T-cell (primary cell): ENCODE measurements at regions of chr3 and their contacts with region 1.

Region 1: DNA sequence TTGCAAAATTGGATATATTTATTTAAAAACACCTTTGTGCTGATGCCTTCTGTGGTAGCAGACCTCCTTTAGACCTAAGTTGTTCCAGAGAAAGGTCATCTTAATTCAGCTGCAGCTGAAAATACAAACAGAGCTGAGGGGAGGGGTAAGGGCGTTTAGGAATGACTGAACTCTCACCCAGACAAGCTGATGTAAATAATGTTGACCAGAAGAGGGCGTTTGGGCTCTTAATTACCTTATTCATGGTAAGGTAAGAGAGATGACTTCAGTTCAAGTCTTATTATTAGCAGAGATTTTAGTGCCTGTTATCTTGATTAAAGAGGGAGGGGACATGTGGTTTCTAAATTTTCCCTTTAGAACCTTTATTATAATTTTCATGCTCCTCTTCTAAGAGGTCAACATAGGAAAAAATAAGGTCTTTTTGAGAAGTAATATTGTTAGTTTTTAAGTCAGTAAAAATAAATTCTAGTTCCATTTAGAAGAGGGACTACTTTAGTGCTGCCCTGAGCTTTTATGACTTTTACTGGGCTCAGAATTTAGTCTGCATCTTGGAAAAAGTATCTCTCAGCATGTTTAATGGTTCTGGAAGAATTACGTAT is 46.3 kb downstream of the GPR171 start:
- DNase-seq: peak in 9 of 35 experiments; percentile 7 to 71 (median 25)
- ATAC-seq: peak; percentile 69 to 77 (median 74)
- H3K4me3 ChIP-seq: no peak overlapping the region
- H3K4me3 Mint-ChIP-seq: no peak overlapping the region
- H3K27ac ChIP-seq: no peak overlapping the region
- H3K27ac Mint-ChIP-seq: no peak overlapping the region
- H3K4me1 ChIP-seq: no peaks in the 10 kb centered on the region
- H3K4me1 Mint-ChIP-seq: no peaks in the 10 kb centered on the region
- H3K27me3 ChIP-seq: peaks cover 0 to 5% of the 10 kb centered on the region in 2 experiments
- H3K27me3 Mint-ChIP-seq: peaks cover 4 to 11% of the 10 kb centered on the region in 2 donors

Region 2: GRCh38 chr3:151203051-151203420 is 46.3 kb after region 1 on chr3 and contains the start of gene GPR171:
- CTCF ChIA-PET with region 1: interaction called, 3 to 12 read pairs
- POLR2A ChIA-PET with region 1: no interaction called
- DNase-seq: peak in 34 of 35 experiments; percentile 41 to 85 (median 64)
- ATAC-seq: peak; percentile 85 to 94 (median 88)
- H3K4me3 ChIP-seq: peak within 1 kb of the TSS; percentile 59 to 80
- H3K4me3 Mint-ChIP-seq: peak within 1 kb of the TSS; percentile 70 to 78 (median 70)
- H3K27ac ChIP-seq: peak within 1 kb of the TSS; percentile 89
- H3K27ac Mint-ChIP-seq: peak within 1 kb of the TSS; percentile 99
- H3K4me1 ChIP-seq: peaks cover 31 to 56% of the 10 kb centered on the region in 2 experiments
- H3K4me1 Mint-ChIP-seq: peaks cover 76 to 85% (median 77%) of the 10 kb centered on the region in 3 donors
- H3K27me3 ChIP-seq: no peaks in the 10 kb centered on the region
- H3K27me3 Mint-ChIP-seq: no peaks in the 10 kb centered on the region
- total RNA-seq, gene GPR171: 23.2 to 67.2 (median 51.9) TPM